ENCODE measurements at regions of chr18 and their contacts with region 1.

Region 1: DNA sequence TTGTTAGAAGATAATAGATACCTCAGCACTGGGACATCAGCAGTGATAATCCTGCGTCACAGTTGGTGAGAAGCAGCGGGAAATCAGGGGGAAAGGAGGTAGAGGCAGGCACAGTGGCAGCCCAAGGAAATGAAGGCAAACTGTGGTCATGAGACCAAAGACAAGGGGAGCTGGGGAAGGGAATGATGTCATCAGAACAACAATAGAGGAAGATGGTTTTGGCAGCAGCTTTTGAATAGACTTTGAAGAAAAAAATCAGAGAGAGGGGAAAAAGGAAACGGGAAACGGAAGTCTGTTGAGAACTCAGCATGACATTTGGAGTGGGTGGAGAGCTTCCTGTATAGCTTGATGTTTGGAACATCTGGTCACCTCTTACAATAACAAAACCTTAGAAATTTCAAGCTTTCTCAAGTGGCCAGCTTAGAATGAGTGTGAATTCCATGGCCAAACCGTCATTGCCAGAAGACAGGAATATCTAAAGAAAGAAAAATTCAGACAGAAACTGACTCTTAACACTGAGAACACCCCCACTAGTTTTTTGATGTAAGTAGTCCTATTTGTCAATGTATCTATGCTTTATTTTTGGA is 18.4 kb upstream of the YES1 start:
- DNase-seq: peak; percentile 23
- H3K4me3 Mint-ChIP-seq: no peak overlapping the region
- H3K27ac Mint-ChIP-seq: no peak overlapping the region
- H3K4me1 Mint-ChIP-seq: peaks cover 8% of the 10 kb centered on the region
- H3K27me3 Mint-ChIP-seq: no peaks in the 10 kb centered on the region
- CTCF ChIP-seq: no peak

Region 2: DNA sequence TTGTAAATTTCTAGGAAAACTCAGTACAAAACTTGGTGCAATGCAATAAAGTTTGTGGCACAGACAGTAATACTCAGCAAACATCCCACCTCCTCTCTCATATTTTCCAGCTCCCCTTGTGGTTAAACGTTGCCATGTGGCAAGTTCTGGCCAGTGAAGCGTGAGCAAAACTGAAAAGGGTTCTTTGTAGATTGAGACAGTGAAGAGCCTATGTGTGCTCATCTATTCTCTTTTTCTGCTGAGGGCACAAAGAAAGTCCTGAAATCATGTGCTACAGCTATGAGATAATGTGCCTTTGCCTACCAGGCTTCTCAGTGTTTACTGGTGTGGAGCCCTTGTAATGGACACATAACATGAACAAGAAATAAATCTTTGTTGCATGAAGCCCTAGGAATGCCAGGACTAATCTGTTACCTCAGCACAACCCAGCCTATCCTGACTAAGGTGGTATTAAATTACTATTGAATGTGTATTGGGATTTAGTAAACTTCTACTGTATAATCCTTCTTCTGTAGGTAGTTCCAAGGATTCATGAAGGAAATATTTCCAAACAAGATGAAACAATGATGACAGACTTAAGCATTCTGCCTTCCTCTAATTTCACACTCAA is 185.9 kb before region 1 on chr18:
- CTCF ChIA-PET with region 1: interaction called, 15 read pairs
- POLR2A ChIA-PET with region 1: no interaction called
- intact Hi-C with region 1: no loop called
- DNase-seq: no peak
- H3K4me3 Mint-ChIP-seq: no peak overlapping the region
- H3K27ac Mint-ChIP-seq: no peak overlapping the region
- H3K4me1 Mint-ChIP-seq: no peaks in the 10 kb centered on the region
- H3K27me3 Mint-ChIP-seq: no peaks in the 10 kb centered on the region
- CTCF ChIP-seq: no peak

Region 3: GRCh38 chr18:703213-703967 is 127.0 kb before region 1 on chr18:
- CTCF ChIA-PET with region 1: interaction called, 31 read pairs
- POLR2A ChIA-PET with region 1: interaction called, 3 read pairs
- intact Hi-C with region 1: no loop called
- DNase-seq: peak; percentile 47
- H3K4me3 Mint-ChIP-seq: peak overlapping the region; percentile 4
- H3K27ac Mint-ChIP-seq: peak overlapping the region; percentile 54
- H3K4me1 Mint-ChIP-seq: peaks cover 14% of the 10 kb centered on the region
- H3K27me3 Mint-ChIP-seq: no peaks in the 10 kb centered on the region
- CTCF ChIP-seq: no peak

Region 4: GRCh38 chr18:741931-742512 is 88.4 kb before region 1 on chr18:
- CTCF ChIA-PET with region 1: interaction called, 277 read pairs
- POLR2A ChIA-PET with region 1: interaction called, 13 read pairs
- intact Hi-C with region 1: loop called (anchors 1 kb)
- DNase-seq: peak; percentile 45
- H3K4me3 Mint-ChIP-seq: no peak overlapping the region
- H3K27ac Mint-ChIP-seq: no peak overlapping the region
- H3K4me1 Mint-ChIP-seq: peaks cover 6% of the 10 kb centered on the region
- H3K27me3 Mint-ChIP-seq: no peaks in the 10 kb centered on the region
- CTCF ChIP-seq: peak; percentile 72

Region 5: DNA sequence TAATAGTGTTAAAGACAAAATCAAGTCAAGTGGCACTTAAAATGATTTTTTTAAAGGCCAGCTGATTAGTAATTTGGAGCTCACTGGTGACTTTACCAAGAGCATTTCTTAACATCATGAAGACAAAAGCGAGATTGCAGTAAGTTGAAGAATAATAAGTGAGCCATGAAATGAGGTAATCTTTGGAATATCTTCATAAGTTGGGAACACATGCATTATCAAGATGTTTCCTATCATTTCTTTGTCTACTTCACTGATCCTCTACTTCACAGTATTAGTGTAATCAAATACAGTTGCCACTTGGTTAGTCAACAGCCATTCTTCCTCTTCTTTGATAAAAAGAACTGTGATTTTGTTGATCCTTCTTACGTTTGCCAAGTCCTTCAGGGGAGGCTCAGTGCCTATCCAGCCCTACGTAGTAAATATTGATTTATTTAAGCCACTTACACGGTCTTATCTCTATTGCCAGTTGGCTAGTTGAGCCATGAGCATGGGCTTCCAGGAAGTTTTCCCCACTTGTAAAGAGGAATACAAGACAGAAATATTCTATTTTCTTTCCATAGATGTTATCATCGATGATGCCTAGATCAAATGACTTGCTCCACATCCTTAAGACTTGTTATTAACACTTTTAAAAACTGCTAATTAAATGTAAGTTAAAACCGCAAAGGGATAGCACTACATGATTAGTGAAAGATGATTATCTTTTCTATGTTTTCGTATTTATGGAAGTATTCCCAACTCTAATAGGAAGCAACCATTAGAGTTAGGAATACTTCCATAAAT is 64.5 kb before region 1 on chr18:
- CTCF ChIA-PET with region 1: interaction called, 16 read pairs
- POLR2A ChIA-PET with region 1: no interaction called
- intact Hi-C with region 1: no loop called
- DNase-seq: no peak
- H3K4me3 Mint-ChIP-seq: no peak overlapping the region
- H3K27ac Mint-ChIP-seq: no peak overlapping the region
- H3K4me1 Mint-ChIP-seq: peaks cover 6% of the 10 kb centered on the region
- H3K27me3 Mint-ChIP-seq: no peaks in the 10 kb centered on the region
- CTCF ChIP-seq: no peak

Region 6: GRCh38 chr18:785242-785641 is 45.2 kb before region 1 on chr18:
- CTCF ChIA-PET with region 1: interaction called, 17 read pairs
- POLR2A ChIA-PET with region 1: no interaction called
- intact Hi-C with region 1: no loop called
- DNase-seq: no peak
- H3K4me3 Mint-ChIP-seq: no peak overlapping the region
- H3K27ac Mint-ChIP-seq: no peak overlapping the region
- H3K4me1 Mint-ChIP-seq: no peaks in the 10 kb centered on the region
- H3K27me3 Mint-ChIP-seq: no peaks in the 10 kb centered on the region
- CTCF ChIP-seq: no peak

Region 7: DNA sequence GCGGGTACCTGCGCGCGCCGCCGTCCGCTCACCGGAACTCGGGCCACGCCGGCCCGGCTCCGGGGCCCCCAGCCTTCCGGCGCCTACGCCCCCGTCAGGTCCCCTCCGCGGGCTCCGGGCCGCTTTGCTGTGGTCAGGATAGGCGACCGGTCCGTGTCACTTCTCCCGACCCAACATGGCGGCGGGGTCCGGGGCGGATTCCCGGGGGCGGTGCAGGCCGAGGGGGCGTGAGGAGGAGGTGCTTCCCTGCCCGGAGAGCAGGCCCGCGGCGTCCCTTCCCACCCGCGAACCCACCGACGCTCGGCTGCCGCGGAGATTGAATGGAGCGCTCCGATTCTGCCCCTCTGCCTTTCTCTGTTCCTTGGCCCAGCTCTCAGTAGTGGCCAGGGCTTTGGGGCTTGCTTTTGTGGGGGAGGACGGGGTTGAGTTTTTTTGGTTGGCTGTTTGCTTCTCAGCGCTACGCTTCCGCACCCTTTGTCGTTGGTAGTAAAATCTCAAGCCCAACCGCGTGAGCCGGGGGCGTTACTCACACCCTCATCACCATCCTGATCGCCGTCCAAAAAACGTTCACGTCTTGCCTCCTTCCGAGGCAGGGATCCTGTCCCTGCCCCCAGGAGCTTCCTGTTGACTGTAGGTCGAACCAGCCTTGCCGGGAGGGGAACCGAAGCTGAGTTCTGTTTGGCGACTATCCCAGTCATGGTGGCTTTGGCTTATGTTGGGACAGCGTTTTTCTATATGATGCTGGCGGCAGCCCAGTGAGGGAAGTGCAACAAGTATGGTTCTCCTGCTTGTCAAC is 17.8 kb before region 1 on chr18:
- CTCF ChIA-PET with region 1: interaction called, 54 read pairs
- POLR2A ChIA-PET with region 1: interaction called, 16 read pairs
- intact Hi-C with region 1: no loop called
- DNase-seq: peak; percentile 87
- H3K4me3 Mint-ChIP-seq: peak overlapping the region; percentile 95
- H3K27ac Mint-ChIP-seq: peak overlapping the region; percentile 99
- H3K4me1 Mint-ChIP-seq: peaks cover 26% of the 10 kb centered on the region
- H3K27me3 Mint-ChIP-seq: no peaks in the 10 kb centered on the region
- CTCF ChIP-seq: no peak

Measured in MCF 10A (cell line).